CD4-positive, alpha-beta T cell (primary cell): ENCODE measurements at regions of chr11 and their contacts with region 1.

Region 1: DNA sequence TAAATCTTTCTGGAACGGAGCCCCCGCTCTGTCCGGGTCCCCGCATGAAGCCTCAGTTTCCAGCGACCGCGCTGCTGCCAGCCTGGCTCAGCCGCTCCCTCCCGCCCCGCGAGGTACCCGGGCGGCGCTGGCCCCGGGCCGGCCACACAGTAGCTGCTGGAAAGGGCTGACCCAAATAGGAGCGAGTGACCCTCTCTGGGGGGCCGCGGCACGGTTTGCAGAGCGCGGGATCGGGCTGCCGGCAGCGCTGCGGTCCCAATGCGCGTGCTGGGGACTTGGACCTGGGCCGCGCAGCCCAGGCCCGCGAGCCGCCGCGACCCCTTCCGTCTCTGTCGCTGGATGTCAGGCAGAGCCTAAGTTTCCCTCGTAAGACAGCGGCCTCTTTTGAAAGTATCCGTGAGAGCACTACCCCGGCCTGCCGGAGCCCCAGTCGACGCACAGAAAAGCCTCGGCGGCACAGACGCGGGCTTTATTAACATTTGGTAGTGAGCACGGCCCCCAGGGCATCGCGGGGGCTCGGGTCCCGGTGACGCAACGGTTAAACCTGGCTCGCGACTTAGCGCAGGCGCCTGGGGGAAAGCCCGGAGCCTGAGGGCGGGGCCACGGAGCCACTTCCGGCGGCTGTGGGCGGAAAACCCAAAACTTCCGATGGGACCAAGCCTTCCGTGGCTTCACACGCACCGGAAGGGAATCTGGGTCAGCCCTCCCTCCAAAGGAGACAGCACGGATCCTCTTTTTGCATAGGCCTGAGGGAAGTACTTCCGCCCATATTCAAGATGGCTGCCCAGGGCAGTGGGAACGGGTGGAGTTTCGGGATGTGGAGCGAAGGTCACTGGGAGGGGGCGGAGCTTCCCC is 14.9 kb downstream of the BAD start:
- DNase-seq: peak; percentile 94 to 99 (median 96)
- ATAC-seq: peak; percentile 68
- H3K4me3 ChIP-seq: peak overlapping the region; percentile 97
- H3K4me3 Mint-ChIP-seq: peak overlapping the region; percentile 94
- H3K27ac ChIP-seq: peak overlapping the region; percentile 92 to 99
- H3K27ac Mint-ChIP-seq: peak overlapping the region; percentile 99
- H3K4me1 ChIP-seq: peaks cover 43% of the 10 kb centered on the region
- H3K4me1 Mint-ChIP-seq: peaks cover 32% of the 10 kb centered on the region
- H3K27me3 ChIP-seq: no peaks in the 10 kb centered on the region
- H3K27me3 Mint-ChIP-seq: peaks cover 5% of the 10 kb centered on the region
- CTCF ChIP-seq: no peak

Region 2: GRCh38 chr11:64185816-64186498 is 83.7 kb before region 1 on chr11 and contains the start of gene STIP1:
- CTCF ChIA-PET with region 1: interaction called, 7 read pairs
- POLR2A ChIA-PET with region 1: interaction called, 19 read pairs
- intact Hi-C with region 1: no loop called
- DNase-seq: peak in 13 of 14 experiments; percentile 94 to 100 (median 97)
- ATAC-seq: peak; percentile 87
- H3K4me3 ChIP-seq: peak within 1 kb of the TSS; percentile 80
- H3K4me3 Mint-ChIP-seq: peak within 1 kb of the TSS; percentile 99
- H3K27ac ChIP-seq: peak within 1 kb of the TSS; percentile 47 to 57
- H3K27ac Mint-ChIP-seq: no peak within 1 kb of the TSS
- H3K4me1 ChIP-seq: peaks cover 41% of the 10 kb centered on the region
- H3K4me1 Mint-ChIP-seq: peaks cover 45% of the 10 kb centered on the region
- H3K27me3 ChIP-seq: no peaks in the 10 kb centered on the region
- H3K27me3 Mint-ChIP-seq: no peaks in the 10 kb centered on the region
- CTCF ChIP-seq: peak; percentile 15
- total RNA-seq, gene STIP1: 29.0 to 37.5 TPM

Region 3: GRCh38 chr11:64196626-64197025 is 73.0 kb before region 1 on chr11:
- CTCF ChIA-PET with region 1: no interaction called
- POLR2A ChIA-PET with region 1: no interaction called
- intact Hi-C with region 1: no loop called
- DNase-seq: no peak
- ATAC-seq: no peak
- H3K4me3 ChIP-seq: no peak overlapping the region
- H3K4me3 Mint-ChIP-seq: no peak overlapping the region
- H3K27ac ChIP-seq: no peak overlapping the region
- H3K27ac Mint-ChIP-seq: no peak overlapping the region
- H3K4me1 ChIP-seq: peaks cover 10% of the 10 kb centered on the region
- H3K4me1 Mint-ChIP-seq: peaks cover 10% of the 10 kb centered on the region
- H3K27me3 ChIP-seq: no peaks in the 10 kb centered on the region
- H3K27me3 Mint-ChIP-seq: no peaks in the 10 kb centered on the region
- CTCF ChIP-seq: no peak

Region 4: DNA sequence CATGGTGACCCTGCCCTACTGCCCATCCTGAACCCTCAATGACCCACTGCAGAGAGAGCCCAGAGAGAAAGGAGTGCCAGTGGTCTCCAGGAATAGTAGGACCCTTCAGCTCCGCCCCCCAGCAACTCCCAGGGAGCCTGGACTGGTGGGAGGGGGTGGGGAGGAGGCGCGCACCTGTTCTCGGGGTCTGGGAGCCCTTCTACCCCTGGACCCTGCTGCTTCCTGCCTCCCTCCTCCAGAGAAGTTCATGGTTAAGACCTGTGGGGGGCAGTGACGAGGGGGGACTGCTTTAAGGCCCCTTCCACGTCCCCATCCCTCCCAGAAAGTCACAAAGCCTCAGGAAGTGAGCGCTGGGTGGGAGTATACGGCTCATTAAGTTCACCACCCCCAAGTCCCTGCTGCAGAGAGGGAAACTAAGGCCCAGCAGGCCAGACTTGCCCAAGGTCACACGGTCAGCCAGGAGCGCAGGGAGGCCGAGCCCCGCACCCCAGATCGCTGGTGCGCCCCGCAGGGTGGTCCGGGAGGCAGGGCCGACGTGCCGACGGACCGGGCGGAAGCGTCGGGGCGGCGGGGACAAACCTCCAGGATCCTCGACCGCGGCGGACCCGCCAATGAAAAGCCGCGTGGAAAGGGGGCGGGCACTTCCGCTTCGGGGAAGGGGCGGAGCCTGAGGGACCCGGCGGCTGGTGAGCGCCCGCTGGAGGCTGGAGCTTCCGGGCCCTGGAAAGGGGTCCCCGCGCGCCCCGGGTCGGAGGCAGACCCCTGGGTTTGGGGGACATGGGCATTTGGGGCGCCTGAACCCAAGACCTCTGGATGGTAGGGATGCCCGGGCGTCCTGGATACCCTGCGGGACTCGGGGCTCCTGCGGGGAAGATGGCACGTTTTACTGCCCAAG is 43.7 kb before region 1 on chr11 and contains the starts of genes NUDT22 and TRPT1:
- CTCF ChIA-PET with region 1: no interaction called
- POLR2A ChIA-PET with region 1: interaction called, 22 read pairs
- intact Hi-C with region 1: loop called in 1 of 2 experiments (anchors 5 kb)
- DNase-seq: peak; percentile 79 to 96 (median 91)
- ATAC-seq: peak; percentile 67
- H3K4me3 ChIP-seq: peak within 1 kb of the TSS; percentile 99
- H3K4me3 Mint-ChIP-seq: peak within 1 kb of the TSS; percentile 97
- H3K27ac ChIP-seq: peak within 1 kb of the TSS; percentile 77 to 87
- H3K27ac Mint-ChIP-seq: peak within 1 kb of the TSS; percentile 87
- H3K4me1 ChIP-seq: peaks cover 57% of the 10 kb centered on the region
- H3K4me1 Mint-ChIP-seq: peaks cover 39% of the 10 kb centered on the region
- H3K27me3 ChIP-seq: no peaks in the 10 kb centered on the region
- H3K27me3 Mint-ChIP-seq: no peaks in the 10 kb centered on the region
- CTCF ChIP-seq: peak; percentile 7
- total RNA-seq, gene NUDT22: 26.8 to 26.9 TPM
- total RNA-seq, gene TRPT1: 11.3 to 11.5 TPM

Region 5: GRCh38 chr11:64246871-64247728 is 22.5 kb before region 1 on chr11 and contains the start of gene PPP1R14B:
- CTCF ChIA-PET with region 1: interaction called, 6 read pairs
- POLR2A ChIA-PET with region 1: interaction called, 69 read pairs
- intact Hi-C with region 1: loop called (anchors 1 kb)
- DNase-seq: peak; percentile 60 to 89 (median 76)
- ATAC-seq: peak; percentile 63
- H3K4me3 ChIP-seq: peak within 1 kb of the TSS; percentile 90
- H3K4me3 Mint-ChIP-seq: peak within 1 kb of the TSS; percentile 94
- H3K27ac ChIP-seq: peak within 1 kb of the TSS; percentile 48 to 57
- H3K27ac Mint-ChIP-seq: peak within 1 kb of the TSS; percentile 82
- H3K4me1 ChIP-seq: peaks cover 61% of the 10 kb centered on the region
- H3K4me1 Mint-ChIP-seq: peaks cover 41% of the 10 kb centered on the region
- H3K27me3 ChIP-seq: no peaks in the 10 kb centered on the region
- H3K27me3 Mint-ChIP-seq: no peaks in the 10 kb centered on the region
- CTCF ChIP-seq: no peak
- total RNA-seq, gene PPP1R14B: 17.1 to 21.0 TPM

Region 6: DNA sequence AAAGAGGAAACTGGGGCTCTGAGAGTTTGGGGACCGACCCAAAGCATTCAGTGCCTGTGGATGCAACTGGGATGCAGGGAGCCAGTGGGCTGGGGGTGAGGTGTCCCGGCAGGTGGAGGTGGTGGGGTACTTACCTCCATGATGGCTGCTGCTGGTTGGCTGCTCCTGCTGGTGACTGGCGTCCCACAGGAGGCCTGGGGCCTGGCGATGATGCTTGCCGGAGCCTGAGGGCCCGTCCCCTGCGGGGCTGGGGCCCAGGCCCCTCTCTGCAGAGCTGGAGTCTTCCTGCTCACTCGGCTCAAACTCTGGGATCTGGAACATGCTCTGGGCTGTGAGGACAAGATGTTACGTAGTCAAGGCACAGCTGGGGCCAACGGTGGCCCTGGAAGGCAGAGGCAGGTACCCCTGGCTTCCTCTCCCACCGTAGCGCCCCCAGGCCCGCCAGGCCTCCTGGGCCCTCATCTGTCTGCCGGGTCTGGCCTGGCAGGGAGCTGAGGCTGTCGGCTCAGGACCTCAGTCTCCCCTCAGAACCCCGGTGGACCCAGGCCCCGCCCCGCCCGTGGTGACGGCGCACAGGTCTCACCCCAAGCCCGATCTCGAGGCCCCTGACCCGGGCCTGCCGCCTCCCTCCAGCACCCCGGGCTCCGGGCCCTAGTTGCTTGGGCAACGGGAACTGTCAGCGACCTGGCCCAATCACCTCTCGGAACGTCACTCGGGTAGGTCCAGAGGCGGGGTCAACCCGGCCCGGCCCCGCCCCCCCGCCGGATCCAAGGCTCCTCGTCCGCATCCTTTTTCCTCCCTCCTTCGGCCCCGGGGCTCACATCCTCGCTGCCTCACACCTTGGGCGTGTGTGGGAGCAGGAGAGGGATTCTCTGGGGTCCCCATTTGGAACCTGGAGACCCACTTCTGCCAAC is 14.7 kb after region 1 on chr11 and contains the start of gene BAD:
- CTCF ChIA-PET with region 1: interaction called, 36 read pairs
- POLR2A ChIA-PET with region 1: interaction called, 125 read pairs
- intact Hi-C with region 1: loop called (anchors 1 kb)
- DNase-seq: peak; percentile 87 to 95 (median 91)
- ATAC-seq: peak; percentile 77
- H3K4me3 ChIP-seq: peak within 1 kb of the TSS; percentile 97
- H3K4me3 Mint-ChIP-seq: peak within 1 kb of the TSS; percentile 93
- H3K27ac ChIP-seq: peak within 1 kb of the TSS; percentile 99 to 100
- H3K27ac Mint-ChIP-seq: peak within 1 kb of the TSS; percentile 97
- H3K4me1 ChIP-seq: peaks cover 37% of the 10 kb centered on the region
- H3K4me1 Mint-ChIP-seq: peaks cover 21% of the 10 kb centered on the region
- H3K27me3 ChIP-seq: no peaks in the 10 kb centered on the region
- H3K27me3 Mint-ChIP-seq: no peaks in the 10 kb centered on the region
- CTCF ChIP-seq: no peak
- total RNA-seq, gene BAD: 22.5 to 23.0 TPM